Aorta (tissue), 5 donors: ENCODE measurements at regions of chr16 and their contacts with region 1.

Region 1: DNA sequence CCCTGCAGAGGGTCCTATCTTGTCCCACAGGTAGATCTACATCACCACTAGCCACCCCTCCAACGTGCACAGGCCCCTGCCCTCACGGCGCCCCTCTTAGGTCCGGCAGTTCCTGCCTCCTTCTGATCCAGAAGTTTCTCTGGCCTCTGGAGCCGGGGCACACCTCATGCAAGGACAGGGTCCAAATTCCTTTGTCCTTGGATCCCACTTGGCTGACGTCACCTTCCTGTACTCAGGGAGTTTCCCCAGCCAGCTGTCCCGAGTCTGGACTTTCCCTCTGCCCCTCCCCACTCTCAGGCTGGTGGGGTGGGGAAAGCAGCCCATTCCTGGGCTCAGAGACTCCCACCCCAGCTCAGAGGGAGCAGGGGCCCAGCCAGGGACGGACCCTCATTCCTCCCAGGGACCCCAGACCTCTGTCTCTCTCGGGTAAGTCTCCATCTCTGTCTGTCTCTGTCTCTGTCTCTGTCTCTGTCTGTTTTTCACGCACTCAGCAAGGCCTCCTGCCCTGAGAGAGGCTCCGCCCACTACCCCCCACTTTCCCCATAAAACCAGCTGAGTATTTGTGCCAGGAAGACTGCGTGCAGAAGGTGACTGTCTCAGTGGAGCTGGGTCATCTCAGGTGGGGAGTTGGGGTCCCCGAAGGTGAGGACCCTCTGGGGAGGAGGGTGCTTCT is at the start of gene IL32:
- DNase-seq: peak in 1 of 2 donors; percentile 77
- ATAC-seq: peak; percentile 82
- H3K4me3 ChIP-seq: no peak within 1 kb of the TSS
- H3K27ac ChIP-seq: no peak within 1 kb of the TSS
- H3K4me1 ChIP-seq: no peaks in the 10 kb centered on the region
- H3K27me3 ChIP-seq: no peaks in the 10 kb centered on the region
- total RNA-seq, gene IL32: 30.2 to 71.6 TPM

Region 2: DNA sequence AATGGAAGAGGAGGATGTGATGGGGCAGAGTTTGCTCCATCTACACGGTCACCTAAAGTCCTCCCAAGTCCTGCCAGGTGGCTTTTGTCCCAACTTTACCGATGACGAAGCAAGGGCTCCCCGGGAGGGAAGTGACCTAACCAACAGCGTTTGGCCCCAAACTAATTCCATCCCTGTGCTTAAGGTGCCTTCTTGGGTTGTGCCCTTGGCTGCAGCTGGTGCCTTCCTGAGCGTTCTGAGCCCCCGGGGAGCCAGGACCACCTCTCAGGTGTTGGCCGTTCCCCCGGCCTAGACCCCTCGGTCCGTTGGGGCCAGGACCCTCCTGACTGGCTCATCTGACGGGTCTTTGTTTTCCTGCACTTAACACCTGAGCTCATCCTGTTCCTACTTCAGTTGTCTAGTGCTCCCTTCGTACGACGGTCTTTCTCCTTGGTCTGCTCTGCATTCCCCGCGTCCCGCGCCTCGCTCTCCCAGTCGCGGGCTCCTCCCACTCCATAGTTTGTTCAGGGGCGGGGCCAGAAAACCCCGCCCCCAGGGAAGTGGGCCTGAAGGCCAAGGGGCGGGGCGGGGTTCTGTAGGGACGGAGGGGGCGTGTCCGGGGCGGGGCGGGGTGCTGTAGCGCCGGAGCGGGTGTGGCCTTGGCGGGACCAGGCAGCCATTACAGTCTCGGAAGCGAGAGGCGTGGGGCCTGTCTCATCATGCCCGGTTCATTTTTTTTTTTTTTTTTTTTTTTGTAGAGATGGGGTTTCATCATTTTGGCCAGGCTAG is 34.7 kb after region 1 on chr16:
- intact Hi-C with region 1: no loop called
- DNase-seq: peak; percentile 95
- ATAC-seq: peak; percentile 92
- H3K4me3 ChIP-seq: no peak overlapping the region
- H3K27ac ChIP-seq: no peak overlapping the region
- H3K4me1 ChIP-seq: no peaks in the 10 kb centered on the region
- H3K27me3 ChIP-seq: no peaks in the 10 kb centered on the region

Region 3: DNA sequence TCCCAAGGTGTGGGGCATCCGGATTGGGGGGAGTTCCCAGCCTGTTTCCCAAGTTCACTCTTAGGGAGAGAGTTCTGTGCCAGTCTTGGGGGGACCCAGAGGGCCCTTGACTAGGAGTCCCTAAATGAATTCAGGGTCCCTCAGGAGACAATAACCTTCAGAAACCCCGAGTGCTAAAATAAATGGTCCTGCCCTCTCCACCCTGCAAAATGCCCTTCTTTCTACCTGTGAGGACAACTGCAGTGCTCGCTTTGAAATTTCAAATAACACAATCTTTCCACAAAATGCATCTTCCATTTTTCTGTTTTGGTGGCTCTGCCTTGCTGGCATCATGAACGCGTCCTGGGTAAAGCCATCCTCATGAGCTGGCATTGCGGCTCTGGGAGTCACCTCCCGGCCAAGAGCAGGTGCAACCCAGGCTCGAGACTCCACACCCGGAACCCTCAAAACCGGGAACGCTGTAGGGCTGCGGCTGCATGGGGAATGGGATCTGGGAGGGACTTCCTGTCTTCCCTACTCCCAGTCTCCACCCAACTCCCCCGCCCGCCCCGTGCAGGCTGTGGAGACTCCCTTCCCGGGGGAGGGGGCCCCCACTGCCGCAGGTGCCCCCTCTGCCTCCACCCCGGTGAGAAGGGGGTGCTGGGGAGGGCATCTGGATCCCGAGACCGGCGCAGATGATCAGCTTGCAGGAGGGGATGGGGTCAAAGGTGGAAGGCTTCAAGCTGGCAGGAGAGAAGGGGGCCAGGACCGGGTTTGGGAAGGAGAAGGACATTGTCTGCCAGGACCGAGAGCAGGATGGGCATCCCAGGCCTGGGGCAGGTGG is 47.1 kb after region 1 on chr16 and contains the start of gene ZNF205:
- intact Hi-C with region 1: loop called in 1 of 2 experiments (anchors 2 kb)
- DNase-seq: peak; percentile 82 to 90
- ATAC-seq: peak; percentile 89
- H3K4me3 ChIP-seq: peak within 1 kb of the TSS; percentile 79 to 86
- H3K27ac ChIP-seq: peak within 1 kb of the TSS in 1 of 2 donors; percentile 19
- H3K4me1 ChIP-seq: no peaks in the 10 kb centered on the region
- H3K27me3 ChIP-seq: no peaks in the 10 kb centered on the region
- total RNA-seq, gene ZNF205: 7.1 to 10.0 TPM